ENCODE measurements at regions of chrX and their contacts with region 1.

Region 1: GRCh38 chrX:153724252-153725040 is at the starts of genes ABCD1 and BCAP31:
- DNase-seq: peak; percentile 82 to 93 (median 91)
- ATAC-seq: peak; percentile 88
- H3K4me3 ChIP-seq: peak within 1 kb of the TSS; percentile 55
- H3K4me3 Mint-ChIP-seq: peak within 1 kb of the TSS; percentile 75 to 95 (median 86)
- H3K27ac ChIP-seq: peak within 1 kb of the TSS; percentile 80
- H3K27ac Mint-ChIP-seq: peak within 1 kb of the TSS in 8 of 9 donors; percentile 55 to 87 (median 72)
- H3K4me1 ChIP-seq: peaks cover 10 to 29% of the 10 kb centered on the region in 2 donors
- H3K4me1 Mint-ChIP-seq: peaks cover 9 to 37% (median 28%) of the 10 kb centered on the region in 7 donors
- H3K27me3 ChIP-seq: no peaks in the 10 kb centered on the region
- H3K27me3 Mint-ChIP-seq: no peaks in the 10 kb centered on the region
- total RNA-seq, gene ABCD1: 6.6 to 17.6 (median 10.2) TPM
- total RNA-seq, gene BCAP31: 80.2 to 153 (median 117) TPM

Region 2: DNA sequence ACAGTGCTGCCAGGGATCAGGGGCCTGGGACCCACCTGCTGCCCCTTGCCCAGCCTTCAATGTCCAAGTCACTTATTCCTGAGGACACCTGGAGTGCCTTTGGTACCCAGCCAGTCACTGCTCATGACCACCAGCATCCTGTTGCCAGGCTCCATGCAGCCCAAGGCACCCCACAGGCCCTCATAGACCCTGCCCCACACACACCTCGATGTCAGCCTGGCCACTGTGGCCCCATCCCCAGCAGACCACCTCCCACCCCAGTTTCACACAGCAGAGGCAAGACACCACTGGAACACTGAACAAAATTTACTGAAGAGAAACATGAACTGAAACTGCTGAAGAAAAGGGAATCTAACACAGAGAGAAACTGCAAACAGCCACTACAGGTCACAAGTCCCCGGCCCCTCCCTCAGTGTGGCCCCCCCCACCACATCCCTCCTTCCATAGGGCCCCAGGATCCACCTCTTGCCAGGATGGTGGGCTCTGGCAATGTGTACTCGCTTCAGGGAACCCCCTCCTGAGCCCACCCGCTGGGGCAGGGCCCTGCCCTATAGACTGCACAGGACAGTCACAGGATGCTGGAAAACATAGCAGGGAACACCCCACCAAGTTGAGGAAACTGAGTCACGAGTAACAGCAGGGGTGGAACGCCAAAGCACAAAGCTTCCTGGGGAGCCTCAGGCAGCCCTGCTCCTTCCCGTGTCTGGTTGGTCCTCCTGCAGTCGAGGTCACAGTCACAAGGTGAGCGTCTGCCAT is 735.7 kb before region 1 on chrX:
- CTCF ChIA-PET with region 1: no interaction called
- POLR2A ChIA-PET with region 1: no interaction called
- intact Hi-C with region 1: no loop called
- DNase-seq: no peak
- ATAC-seq: no peak
- H3K4me3 ChIP-seq: no peak overlapping the region
- H3K4me3 Mint-ChIP-seq: peak overlapping the region in 5 of 10 donors; percentile 30 to 75 (median 47)
- H3K27ac ChIP-seq: peak overlapping the region; percentile 21
- H3K27ac Mint-ChIP-seq: peak overlapping the region in 7 of 9 donors; percentile 10 to 92 (median 73)
- H3K4me1 ChIP-seq: no peaks in the 10 kb centered on the region
- H3K4me1 Mint-ChIP-seq: peaks cover 0 to 27% (median 0%) of the 10 kb centered on the region in 7 donors
- H3K27me3 ChIP-seq: no peaks in the 10 kb centered on the region
- H3K27me3 Mint-ChIP-seq: no peaks in the 10 kb centered on the region

Region 3: GRCh38 chrX:153470435-153471363 is 253.7 kb before region 1 on chrX and contains the start of gene HAUS7:
- CTCF ChIA-PET with region 1: no interaction called
- POLR2A ChIA-PET with region 1: no interaction called
- intact Hi-C with region 1: loop called in 1 of 2 experiments (anchors 1 kb)
- DNase-seq: peak; percentile 73 to 88 (median 85)
- ATAC-seq: peak; percentile 92
- H3K4me3 ChIP-seq: peak within 1 kb of the TSS; percentile 74
- H3K4me3 Mint-ChIP-seq: peak within 1 kb of the TSS; percentile 64 to 88 (median 82)
- H3K27ac ChIP-seq: peak within 1 kb of the TSS; percentile 68
- H3K27ac Mint-ChIP-seq: peak within 1 kb of the TSS in 8 of 9 donors; percentile 62 to 85 (median 82)
- H3K4me1 ChIP-seq: peaks cover 3 to 17% of the 10 kb centered on the region in 2 donors
- H3K4me1 Mint-ChIP-seq: peaks cover 0 to 30% (median 12%) of the 10 kb centered on the region in 7 donors
- H3K27me3 ChIP-seq: no peaks in the 10 kb centered on the region
- H3K27me3 Mint-ChIP-seq: no peaks in the 10 kb centered on the region
- total RNA-seq, gene HAUS7: 23.2 to 44.8 (median 31.4) TPM

Region 4: GRCh38 chrX:153582896-153583295 is 141.6 kb before region 1 on chrX:
- CTCF ChIA-PET with region 1: no interaction called
- POLR2A ChIA-PET with region 1: no interaction called
- intact Hi-C with region 1: no loop called
- DNase-seq: peak; percentile 33 to 73 (median 65)
- ATAC-seq: peak; percentile 100
- H3K4me3 ChIP-seq: peak overlapping the region; percentile 20
- H3K4me3 Mint-ChIP-seq: peak overlapping the region; percentile 59 to 88 (median 72)
- H3K27ac ChIP-seq: peak overlapping the region; percentile 41
- H3K27ac Mint-ChIP-seq: peak overlapping the region; percentile 72 to 85 (median 79)
- H3K4me1 ChIP-seq: peaks cover 0 to 14% of the 10 kb centered on the region in 2 donors
- H3K4me1 Mint-ChIP-seq: peaks cover 10 to 39% (median 25%) of the 10 kb centered on the region in 7 donors
- H3K27me3 ChIP-seq: no peaks in the 10 kb centered on the region
- H3K27me3 Mint-ChIP-seq: no peaks in the 10 kb centered on the region

Region 5: DNA sequence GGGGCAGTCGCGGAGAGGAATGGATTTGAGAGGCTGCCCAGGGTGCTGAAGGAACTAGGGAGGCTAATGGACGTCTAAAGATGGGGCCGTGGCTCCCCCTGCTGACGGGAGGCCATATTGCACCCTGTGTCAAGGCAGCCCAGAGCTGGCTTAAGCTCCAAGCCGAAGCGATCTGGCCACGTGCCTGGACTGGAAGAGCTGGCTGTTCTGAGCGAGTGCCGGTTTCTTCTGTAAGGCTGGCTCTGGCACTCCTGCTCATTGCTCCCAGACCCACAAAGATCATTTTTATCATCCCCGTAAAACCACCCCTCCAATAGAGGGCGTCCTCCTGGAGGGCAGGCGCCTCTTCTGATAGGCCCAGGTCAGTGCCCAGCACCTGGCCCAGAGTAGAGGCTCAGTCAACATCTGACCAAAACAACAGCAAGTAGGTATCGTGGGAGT is 56.5 kb before region 1 on chrX:
- CTCF ChIA-PET with region 1: no interaction called
- POLR2A ChIA-PET with region 1: no interaction called
- intact Hi-C with region 1: no loop called
- DNase-seq: peak; percentile 51 to 78 (median 65)
- ATAC-seq: peak; percentile 93
- H3K4me3 ChIP-seq: no peak overlapping the region
- H3K4me3 Mint-ChIP-seq: peak overlapping the region; percentile 53 to 82 (median 74)
- H3K27ac ChIP-seq: no peak overlapping the region
- H3K27ac Mint-ChIP-seq: peak overlapping the region in 4 of 9 donors; percentile 2 to 51 (median 37)
- H3K4me1 ChIP-seq: no peaks in the 10 kb centered on the region
- H3K4me1 Mint-ChIP-seq: peaks cover 5 to 10% (median 7%) of the 10 kb centered on the region in 7 donors
- H3K27me3 ChIP-seq: no peaks in the 10 kb centered on the region
- H3K27me3 Mint-ChIP-seq: peaks cover 0 to 28% (median 7%) of the 10 kb centered on the region in 5 donors

Region 6: DNA sequence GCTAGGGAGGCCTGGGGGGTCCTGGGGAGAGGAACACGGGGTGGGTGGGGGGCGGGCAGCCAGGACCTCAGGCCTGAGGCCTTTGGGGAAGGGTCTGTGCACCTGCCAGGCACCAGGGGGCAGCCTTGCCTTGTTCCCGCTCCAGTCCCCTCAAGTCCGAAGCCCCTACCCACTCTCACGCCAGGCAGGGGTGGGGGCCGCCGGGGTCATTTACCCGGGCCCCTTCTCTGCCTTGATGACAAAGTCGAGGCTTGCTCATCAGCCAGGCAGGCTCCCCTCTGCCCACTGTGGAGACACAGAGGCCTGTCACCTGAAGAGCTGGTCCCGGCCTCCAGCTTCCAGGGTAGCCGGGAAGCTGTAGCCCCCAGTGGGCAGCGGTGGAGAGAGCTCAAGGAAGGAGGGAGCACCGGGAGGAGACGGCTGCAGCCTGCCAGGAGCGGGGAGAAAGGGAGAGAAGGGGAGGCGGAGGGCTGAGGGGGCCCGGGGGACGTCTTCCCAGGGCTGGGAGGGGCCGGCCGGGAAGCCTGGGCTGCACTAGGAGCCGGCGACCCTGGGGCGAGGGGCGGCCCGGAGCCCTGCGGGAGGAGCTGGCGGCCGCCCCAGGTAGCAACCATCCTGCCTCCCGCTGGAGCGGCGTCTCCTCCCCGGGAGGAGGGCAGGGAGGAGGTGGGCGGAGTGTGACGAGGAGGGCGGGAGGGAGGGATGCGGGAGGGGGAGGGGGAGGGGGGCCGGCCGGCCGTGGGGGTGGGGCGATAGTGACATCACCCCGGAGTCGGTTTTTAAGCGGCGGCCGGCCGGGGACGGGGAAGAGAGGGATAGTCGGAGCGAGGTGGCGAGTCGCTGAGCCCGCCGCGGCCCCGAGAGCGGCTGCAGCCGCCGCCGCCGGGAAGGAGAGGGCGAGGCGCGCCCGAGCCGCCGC is 37.1 kb before region 1 on chrX and contains the start of gene SLC6A8:
- CTCF ChIA-PET with region 1: no interaction called
- POLR2A ChIA-PET with region 1: no interaction called
- intact Hi-C with region 1: loop called in 1 of 2 experiments (anchors 5 kb)
- DNase-seq: peak in 4 of 9 donors; percentile 17 to 56 (median 33)
- ATAC-seq: peak; percentile 51
- H3K4me3 ChIP-seq: no peak within 1 kb of the TSS
- H3K4me3 Mint-ChIP-seq: peak within 1 kb of the TSS; percentile 49 to 84 (median 75)
- H3K27ac ChIP-seq: no peak within 1 kb of the TSS
- H3K27ac Mint-ChIP-seq: peak within 1 kb of the TSS in 1 of 9 donors; percentile 3
- H3K4me1 ChIP-seq: no peaks in the 10 kb centered on the region
- H3K4me1 Mint-ChIP-seq: peaks cover 0 to 4% (median 0%) of the 10 kb centered on the region in 7 donors
- H3K27me3 ChIP-seq: no peaks in the 10 kb centered on the region
- H3K27me3 Mint-ChIP-seq: peaks cover 0 to 26% (median 0%) of the 10 kb centered on the region in 5 donors
- total RNA-seq, gene SLC6A8: 0.14 to 2.6 (median 0.84) TPM

Region 7: GRCh38 chrX:153800177-153800722 is 75.8 kb after region 1 on chrX:
- CTCF ChIA-PET with region 1: no interaction called
- POLR2A ChIA-PET with region 1: no interaction called
- intact Hi-C with region 1: no loop called
- DNase-seq: no peak
- ATAC-seq: no peak
- H3K4me3 ChIP-seq: no peak overlapping the region
- H3K4me3 Mint-ChIP-seq: no peak overlapping the region
- H3K27ac ChIP-seq: no peak overlapping the region
- H3K27ac Mint-ChIP-seq: no peak overlapping the region
- H3K4me1 ChIP-seq: no peaks in the 10 kb centered on the region
- H3K4me1 Mint-ChIP-seq: peaks cover 0 to 20% (median 9%) of the 10 kb centered on the region in 7 donors
- H3K27me3 ChIP-seq: no peaks in the 10 kb centered on the region
- H3K27me3 Mint-ChIP-seq: no peaks in the 10 kb centered on the region

Region 8: DNA sequence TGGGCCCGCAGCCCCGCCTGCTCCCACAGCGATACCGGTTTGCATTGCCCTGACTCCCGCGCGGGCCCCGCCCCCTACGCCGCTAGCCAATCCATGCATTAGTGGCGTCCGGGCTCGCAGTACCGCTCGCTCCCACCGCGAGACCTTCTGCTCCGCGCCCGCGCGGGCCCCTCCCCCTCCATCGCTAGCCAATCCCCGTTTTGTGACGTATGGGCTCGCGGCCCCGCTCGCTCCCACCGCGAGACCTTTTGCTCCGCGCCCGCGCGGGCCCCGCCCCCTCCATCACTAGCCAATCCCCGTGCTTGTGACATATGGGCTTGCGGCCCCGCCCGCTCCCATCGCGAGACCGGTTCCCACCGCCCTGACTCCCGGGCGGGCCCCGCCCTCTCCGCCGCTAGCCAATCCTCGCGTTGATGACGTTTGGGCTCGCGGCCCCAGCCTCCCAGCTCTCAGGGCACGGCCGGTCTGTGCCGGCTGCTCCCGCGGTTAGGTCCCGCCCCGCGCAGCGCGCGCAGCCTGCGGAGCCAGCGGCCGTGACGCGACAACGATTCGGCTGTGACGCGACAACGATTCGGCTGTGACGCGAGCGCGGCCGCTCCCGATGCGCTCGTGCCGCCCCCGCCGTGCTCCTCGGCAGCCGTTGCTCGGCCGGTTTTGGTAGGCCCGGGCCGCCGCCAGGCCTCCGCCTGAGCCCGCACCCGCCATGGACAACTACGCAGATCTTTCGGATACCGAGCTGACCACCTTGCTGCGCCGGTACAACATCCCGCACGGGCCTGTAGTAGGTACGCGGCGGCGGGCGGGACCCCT is 654.5 kb after region 1 on chrX and contains the start of gene EMD:
- CTCF ChIA-PET with region 1: no interaction called
- POLR2A ChIA-PET with region 1: no interaction called
- intact Hi-C with region 1: loop called in 1 of 2 experiments (anchors 5 kb)
- DNase-seq: peak; percentile 88 to 98 (median 96)
- ATAC-seq: peak; percentile 87
- H3K4me3 ChIP-seq: peak within 1 kb of the TSS; percentile 68
- H3K4me3 Mint-ChIP-seq: peak within 1 kb of the TSS; percentile 73 to 88 (median 84)
- H3K27ac ChIP-seq: peak within 1 kb of the TSS; percentile 99
- H3K27ac Mint-ChIP-seq: peak within 1 kb of the TSS; percentile 72 to 95 (median 92)
- H3K4me1 ChIP-seq: peaks cover 10 to 18% of the 10 kb centered on the region in 2 donors
- H3K4me1 Mint-ChIP-seq: peaks cover 4 to 21% (median 12%) of the 10 kb centered on the region in 7 donors
- H3K27me3 ChIP-seq: no peaks in the 10 kb centered on the region
- H3K27me3 Mint-ChIP-seq: no peaks in the 10 kb centered on the region
- total RNA-seq, gene EMD: 53.5 to 141 (median 89.9) TPM

Region 9: GRCh38 chrX:154762523-154763289 is 1038.3 kb after region 1 on chrX and contains the start of gene DKC1:
- CTCF ChIA-PET with region 1: no interaction called
- POLR2A ChIA-PET with region 1: no interaction called
- intact Hi-C with region 1: loop called in 1 of 2 experiments (anchors 5 kb)
- DNase-seq: peak; percentile 85 to 95 (median 93)
- ATAC-seq: peak; percentile 94
- H3K4me3 ChIP-seq: peak within 1 kb of the TSS; percentile 61
- H3K4me3 Mint-ChIP-seq: peak within 1 kb of the TSS; percentile 85 to 92 (median 90)
- H3K27ac ChIP-seq: peak within 1 kb of the TSS; percentile 72
- H3K27ac Mint-ChIP-seq: peak within 1 kb of the TSS; percentile 89 to 97 (median 92)
- H3K4me1 ChIP-seq: peaks cover 9% of the 10 kb centered on the region in 2 donors
- H3K4me1 Mint-ChIP-seq: peaks cover 0 to 24% (median 18%) of the 10 kb centered on the region in 7 donors
- H3K27me3 ChIP-seq: no peaks in the 10 kb centered on the region
- H3K27me3 Mint-ChIP-seq: no peaks in the 10 kb centered on the region
- total RNA-seq, gene DKC1: 50.5 to 75.0 (median 66.5) TPM

Measured in naive thymus-derived CD4-positive, alpha-beta T cell (primary cell).